Lower leg skin (tissue), 4 donors: ENCODE measurements at regions of chr9 and their contacts with region 1.

Region 1: GRCh38 chr9:87812375-87813118 is 70.1 kb upstream of the SPATA31E1 start:
- DNase-seq: no peak
- H3K4me3 ChIP-seq: no peak overlapping the region
- CTCF ChIP-seq: peak in 1 of 3 donors; percentile 37
- POLR2A ChIP-seq: no peak

Region 2: DNA sequence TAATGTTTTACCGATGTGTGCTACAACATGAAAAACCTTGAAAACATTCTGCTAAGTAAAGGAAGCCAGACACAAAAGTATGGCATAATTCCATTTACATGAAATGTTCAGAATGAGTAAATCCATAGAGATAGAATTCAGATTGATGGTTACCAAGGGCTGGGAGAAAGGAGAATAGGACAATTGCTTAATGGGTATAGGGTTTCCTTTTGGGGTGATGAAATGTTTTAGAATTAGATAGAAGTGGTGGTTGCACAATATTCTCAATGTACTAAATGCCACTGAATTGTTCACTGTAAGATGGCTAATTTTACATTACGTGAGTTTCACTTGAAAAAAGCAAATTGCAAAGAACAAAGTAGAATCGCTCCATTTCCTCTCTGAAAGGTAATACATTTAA is 822.3 kb before region 1 on chr9:
- intact Hi-C with region 1: no loop called
- DNase-seq: no peak
- H3K4me3 ChIP-seq: no peak overlapping the region
- CTCF ChIP-seq: no peak
- POLR2A ChIP-seq: no peak

Region 3: GRCh38 chr9:87684627-87685219 is 127.8 kb before region 1 on chr9:
- intact Hi-C with region 1: loop called (anchors 5 kb)
- DNase-seq: peak in 1 of 2 donors; percentile 89
- H3K4me3 ChIP-seq: no peak overlapping the region
- CTCF ChIP-seq: no peak
- POLR2A ChIP-seq: no peak

Region 4: GRCh38 chr9:88049677-88050352 is 237.3 kb after region 1 on chr9:
- intact Hi-C with region 1: loop called (anchors 5 kb)
- DNase-seq: no peak
- H3K4me3 ChIP-seq: no peak overlapping the region
- CTCF ChIP-seq: no peak
- POLR2A ChIP-seq: no peak